ENCODE measurements at regions of chr14 and their contacts with region 1.

Region 1: DNA sequence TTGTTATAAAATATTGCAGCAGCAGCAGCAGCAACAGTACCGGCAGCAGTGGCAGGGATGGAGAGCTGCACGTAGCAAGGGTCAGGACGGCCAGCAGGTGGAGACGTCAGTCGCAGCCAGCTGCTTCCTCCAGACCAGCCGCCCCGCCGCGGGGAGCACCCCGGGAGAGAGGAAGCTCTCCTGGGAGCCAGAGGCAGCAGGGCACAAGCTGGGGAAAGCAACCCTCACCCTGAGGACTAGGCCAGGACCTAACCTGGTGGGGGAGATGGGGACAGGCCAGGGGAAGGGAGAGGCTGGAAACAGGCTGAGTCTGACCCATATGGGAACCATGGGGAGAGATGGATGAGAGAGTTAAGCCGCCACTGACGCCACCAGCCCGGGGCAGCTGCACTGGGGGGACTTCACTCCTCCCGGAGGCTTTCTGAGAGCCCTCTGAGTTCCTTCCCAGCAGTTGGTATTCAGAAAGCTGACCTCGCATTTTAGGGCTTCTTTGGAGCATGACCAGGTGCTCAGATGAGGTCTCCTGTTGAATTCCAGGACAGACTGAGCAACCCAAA is 56.3 kb downstream of the SPTB start:
- H3K4me3 ChIP-seq: no peak overlapping the region
- H3K27ac ChIP-seq: no peak overlapping the region
- H3K4me1 ChIP-seq: no peaks in the 10 kb centered on the region
- CTCF ChIP-seq: peak; percentile 77

Region 2: DNA sequence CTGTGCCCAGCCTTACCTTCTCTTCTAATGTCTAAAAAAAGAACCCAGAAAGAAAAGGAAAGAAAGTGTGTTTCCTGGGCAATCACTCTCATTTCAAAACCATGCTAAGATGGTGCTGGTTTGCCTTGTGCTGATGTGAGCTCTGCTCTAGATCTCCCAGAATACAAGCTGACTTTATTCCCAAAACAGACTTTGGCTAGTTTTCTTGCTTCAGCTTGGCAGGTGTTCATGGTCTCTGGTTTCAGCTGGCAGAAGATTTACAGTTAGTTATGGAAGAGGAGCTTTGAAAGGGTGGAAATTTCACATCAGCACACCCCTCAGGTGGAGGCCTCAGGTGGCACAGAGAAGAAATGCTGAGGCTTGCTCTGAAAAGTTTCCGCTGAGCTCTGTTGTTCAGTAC is 239.2 kb before region 1 on chr14:
- CTCF ChIA-PET with region 1: no interaction called
- POLR2A ChIA-PET with region 1: no interaction called
- H3K4me3 ChIP-seq: no peak overlapping the region
- H3K27ac ChIP-seq: no peak overlapping the region
- H3K4me1 ChIP-seq: no peaks in the 10 kb centered on the region
- CTCF ChIP-seq: no peak

Region 3: DNA sequence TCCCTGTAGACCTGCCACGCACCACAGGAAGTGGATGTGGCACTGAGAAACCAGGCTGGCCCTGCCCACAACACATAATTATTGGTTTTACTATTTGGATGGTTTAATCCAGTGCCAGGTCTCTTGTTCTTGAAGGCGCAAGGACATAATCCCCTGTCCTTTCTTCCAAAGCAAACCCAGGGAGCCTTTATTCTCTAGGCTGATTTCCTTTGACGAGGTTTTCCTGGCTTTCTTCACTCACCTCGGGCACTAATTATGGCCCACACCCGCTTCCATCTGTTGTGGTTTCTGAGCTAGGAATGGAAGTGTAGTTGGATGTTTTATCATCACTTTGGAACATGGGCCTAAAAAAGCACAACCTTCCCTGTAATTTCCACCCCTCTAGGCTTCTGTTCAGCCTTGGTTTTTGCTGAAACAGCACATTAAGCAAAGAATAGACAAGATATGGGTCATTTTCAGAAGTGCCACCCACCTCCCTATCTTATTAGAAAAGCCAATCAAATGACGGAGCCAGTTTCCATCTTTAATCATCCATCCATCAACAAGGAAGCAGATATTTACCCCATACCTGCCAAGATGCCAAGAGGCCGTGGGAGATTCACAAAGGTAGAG is 199.7 kb before region 1 on chr14:
- CTCF ChIA-PET with region 1: no interaction called
- POLR2A ChIA-PET with region 1: no interaction called
- H3K4me3 ChIP-seq: no peak overlapping the region
- H3K27ac ChIP-seq: no peak overlapping the region
- H3K4me1 ChIP-seq: no peaks in the 10 kb centered on the region
- CTCF ChIP-seq: no peak

Region 4: GRCh38 chr14:64636208-64636979 is 187.0 kb before region 1 on chr14:
- CTCF ChIA-PET with region 1: no interaction called
- POLR2A ChIA-PET with region 1: no interaction called
- H3K4me3 ChIP-seq: no peak overlapping the region
- H3K27ac ChIP-seq: no peak overlapping the region
- H3K4me1 ChIP-seq: no peaks in the 10 kb centered on the region
- CTCF ChIP-seq: peak; percentile 57

Region 5: DNA sequence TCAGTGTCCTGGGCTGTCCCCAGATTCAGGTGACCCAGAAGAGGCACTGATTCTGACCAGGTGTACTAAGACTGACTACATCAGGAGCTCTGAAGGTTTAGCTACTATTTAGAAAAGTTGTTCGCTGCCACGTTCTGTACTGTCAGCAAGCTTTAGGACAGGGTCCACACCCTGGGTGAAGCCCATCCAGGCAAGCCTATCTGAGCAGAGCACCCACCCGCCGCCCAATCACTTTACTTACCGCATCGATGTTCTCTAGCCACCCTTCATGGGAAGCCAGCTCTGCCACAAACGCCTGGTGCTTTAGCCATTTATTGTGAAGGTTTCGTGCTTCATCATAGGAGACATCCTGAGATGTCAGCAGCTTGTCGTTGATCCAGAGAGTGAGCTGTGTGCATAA is 39.4 kb before region 1 on chr14:
- CTCF ChIA-PET with region 1: no interaction called
- POLR2A ChIA-PET with region 1: no interaction called
- H3K4me3 ChIP-seq: no peak overlapping the region
- H3K27ac ChIP-seq: no peak overlapping the region
- H3K4me1 ChIP-seq: peaks cover 3% of the 10 kb centered on the region
- CTCF ChIP-seq: no peak

Region 6: GRCh38 chr14:64800000-64800399 is 23.4 kb before region 1 on chr14:
- CTCF ChIA-PET with region 1: interaction called, 35 read pairs
- POLR2A ChIA-PET with region 1: no interaction called
- H3K4me3 ChIP-seq: no peak overlapping the region
- H3K27ac ChIP-seq: no peak overlapping the region
- H3K4me1 ChIP-seq: no peaks in the 10 kb centered on the region
- CTCF ChIP-seq: no peak

Region 7: GRCh38 chr14:64841121-64841651 is 17.8 kb after region 1 on chr14:
- CTCF ChIA-PET with region 1: interaction called, 22 read pairs
- POLR2A ChIA-PET with region 1: no interaction called
- H3K4me3 ChIP-seq: no peak overlapping the region
- H3K27ac ChIP-seq: no peak overlapping the region
- H3K4me1 ChIP-seq: no peaks in the 10 kb centered on the region
- CTCF ChIP-seq: no peak

Region 8: GRCh38 chr14:64880221-64881121 is 57.1 kb after region 1 on chr14:
- CTCF ChIA-PET with region 1: interaction called, 28 read pairs
- POLR2A ChIA-PET with region 1: interaction called, 8 read pairs
- H3K4me3 ChIP-seq: peak overlapping the region; percentile 64
- H3K27ac ChIP-seq: peak overlapping the region; percentile 18; the same call in 1 of the 2 replicates
- H3K4me1 ChIP-seq: no peaks in the 10 kb centered on the region
- CTCF ChIP-seq: peak; percentile 44; the same call in 1 of the 2 replicates

Region 9: GRCh38 chr14:64910847-64911495 is 87.6 kb after region 1 on chr14:
- CTCF ChIA-PET with region 1: interaction called, 10 read pairs
- POLR2A ChIA-PET with region 1: no interaction called
- H3K4me3 ChIP-seq: no peak overlapping the region
- H3K27ac ChIP-seq: no peak overlapping the region
- H3K4me1 ChIP-seq: peaks cover 3% of the 10 kb centered on the region; the same call in 1 of the 2 replicates
- CTCF ChIP-seq: no peak